MCF 10A (cell line): ENCODE measurements at regions of chr2 and their contacts with region 1.

Region 1: DNA sequence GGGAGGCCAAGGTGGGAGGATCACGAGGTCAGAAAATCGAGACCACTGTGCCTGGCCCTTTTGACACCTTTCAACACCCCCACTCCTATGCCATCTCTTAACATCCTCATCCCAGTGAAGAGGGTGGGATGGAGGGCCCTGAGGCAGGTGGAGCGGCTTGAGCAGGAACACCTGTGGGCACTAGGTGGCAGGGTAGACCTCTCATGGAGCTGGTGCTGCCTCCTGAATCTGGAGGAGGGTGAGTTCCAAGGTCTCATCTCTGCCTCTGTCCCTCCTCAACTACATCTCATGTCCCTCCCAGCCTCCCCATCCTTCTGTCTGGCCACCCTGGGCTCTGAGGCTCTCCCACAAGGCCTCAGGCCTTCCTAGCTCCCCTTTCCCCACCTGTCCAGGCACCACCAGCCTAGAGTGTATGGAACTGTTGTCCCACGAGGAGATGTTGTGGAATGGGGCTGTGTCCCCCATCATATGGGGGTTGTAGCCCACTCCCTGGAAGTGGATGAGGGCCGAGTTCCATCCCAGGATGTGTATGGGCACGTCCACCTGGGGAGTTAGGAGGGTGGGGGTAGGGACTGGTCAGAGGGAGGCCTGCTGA is 17.0 kb upstream of the CRYBA2 start:
- DNase-seq: peak; percentile 51
- H3K4me3 Mint-ChIP-seq: no peak overlapping the region
- H3K27ac Mint-ChIP-seq: no peak overlapping the region
- H3K4me1 Mint-ChIP-seq: no peaks in the 10 kb centered on the region
- H3K27me3 Mint-ChIP-seq: peaks cover 29% of the 10 kb centered on the region
- CTCF ChIP-seq: peak; percentile 50

Region 2: DNA sequence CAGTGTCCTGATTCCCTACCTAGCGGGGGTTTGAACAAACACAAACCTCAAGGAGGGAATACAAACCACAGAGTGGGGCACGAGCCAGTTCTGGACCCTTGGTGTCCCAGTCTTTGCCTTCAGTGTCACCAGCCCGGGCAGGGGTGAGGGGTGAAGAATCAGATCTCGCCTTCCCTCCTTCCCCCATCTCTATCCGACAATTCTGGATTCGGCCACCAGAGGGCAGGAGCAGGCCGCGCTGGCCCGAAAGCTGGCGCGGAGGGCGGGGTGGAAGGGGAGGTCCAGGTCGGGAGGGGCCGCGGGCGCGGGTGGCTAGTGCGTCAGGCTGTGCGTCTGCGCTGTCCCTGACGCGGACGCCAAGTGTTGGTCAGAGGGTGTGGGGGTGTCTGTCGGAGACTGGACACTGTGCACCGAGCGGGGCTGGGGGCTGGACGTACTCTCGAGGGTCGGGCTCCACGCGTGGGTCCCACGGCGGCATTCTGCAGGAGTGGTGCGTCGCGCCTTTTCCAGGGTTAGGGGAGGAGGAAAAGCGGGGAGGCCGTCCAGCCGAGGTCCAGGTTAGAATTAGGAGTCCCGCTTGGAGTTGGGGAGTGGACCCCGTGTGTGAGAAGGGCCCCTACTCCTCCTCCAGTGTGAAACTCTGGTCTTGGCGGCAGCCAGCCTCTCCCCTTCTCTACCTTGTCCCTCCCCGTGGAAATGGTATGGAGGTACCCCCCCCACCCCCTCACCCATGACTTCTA is 14.1 kb before region 1 on chr2:
- CTCF ChIA-PET with region 1: interaction called, 21 read pairs
- POLR2A ChIA-PET with region 1: no interaction called
- intact Hi-C with region 1: no loop called
- DNase-seq: peak; percentile 82
- H3K4me3 Mint-ChIP-seq: peak overlapping the region; percentile 73
- H3K27ac Mint-ChIP-seq: no peak overlapping the region
- H3K4me1 Mint-ChIP-seq: peaks cover 15% of the 10 kb centered on the region
- H3K27me3 Mint-ChIP-seq: peaks cover 22% of the 10 kb centered on the region
- CTCF ChIP-seq: peak; percentile 84

Region 3: GRCh38 chr2:219020604-219021365 is 10.5 kb after region 1 on chr2:
- CTCF ChIA-PET with region 1: interaction called, 11 read pairs
- POLR2A ChIA-PET with region 1: no interaction called
- intact Hi-C with region 1: no loop called
- DNase-seq: peak; percentile 61
- H3K4me3 Mint-ChIP-seq: no peak overlapping the region
- H3K27ac Mint-ChIP-seq: no peak overlapping the region
- H3K4me1 Mint-ChIP-seq: no peaks in the 10 kb centered on the region
- H3K27me3 Mint-ChIP-seq: no peaks in the 10 kb centered on the region
- CTCF ChIP-seq: no peak